A549 (cell line): ENCODE measurements at regions of chr12 and their contacts with region 1.

Region 1: DNA sequence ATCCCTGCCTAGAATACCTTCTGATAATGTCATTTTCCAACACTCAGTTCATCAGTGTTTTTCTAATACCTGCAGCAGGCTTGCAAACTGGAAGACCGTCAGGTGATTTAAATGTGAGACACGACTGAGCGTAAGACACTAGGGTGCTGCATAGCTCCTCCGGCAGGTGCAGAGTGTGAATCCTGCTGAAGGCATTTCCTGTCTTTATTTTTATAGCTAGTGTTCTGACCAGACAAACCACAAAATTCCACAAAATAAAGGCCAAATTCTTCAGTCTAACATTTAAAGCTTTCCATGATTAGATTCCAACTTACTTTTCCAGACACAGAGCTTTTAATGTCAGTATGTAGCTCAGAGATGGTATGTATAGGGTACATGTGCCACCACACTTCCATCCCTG is 70.7 kb downstream of the BBS10 start:
- DNase-seq: no peak
- ATAC-seq: no peak
- H3K4me3 ChIP-seq: no peak overlapping the region
- H3K27ac ChIP-seq: no peak overlapping the region
- H3K4me1 ChIP-seq: no peaks in the 10 kb centered on the region
- CTCF ChIP-seq: no peak
- EP300 ChIP-seq: no peak
- POLR2A ChIP-seq: no peak
- RAD21 ChIP-seq: no peak

Region 2: GRCh38 chr12:76266797-76267196 is 10.7 kb before region 1 on chr12:
- CTCF ChIA-PET with region 1: interaction called, 11 read pairs
- POLR2A ChIA-PET with region 1: no interaction called
- DNase-seq: peak in 1 of 2 experiments; percentile 6
- ATAC-seq: peak in 1 of 2 experiments; percentile 73; a peak in 3 of 6 replicates
- H3K4me3 ChIP-seq: no peak overlapping the region
- H3K27ac ChIP-seq: peak overlapping the region in 1 of 2 experiments; percentile 48; a peak in 1 of 6 replicates
- H3K4me1 ChIP-seq: peaks cover 4% of the 10 kb centered on the region; the same call in 1 of the 3 replicates
- CTCF ChIP-seq: no peak
- EP300 ChIP-seq: no peak
- POLR2A ChIP-seq: no peak
- RAD21 ChIP-seq: no peak